Activated T-helper 1 cell treated with anti-CD3 and anti-CD28 coated beads, Interleukin-12 subunit alpha, Interleukin-12 subunit beta, Interleukin-2, Interleukin-4 antibody, amounts not matched to agents 30 ng/mL and 10 ng/mL and 1 ng/mL, durations not matched to agents 14 hours and 24 hours and 36 hours (primary cell): ENCODE measurements at regions of chr7 and their contacts with region 1.

Region 1: GRCh38 chr7:105073143-105073542 is 59.1 kb downstream of the KMT2E start:
- DNase-seq: no peak
- H3K4me3 Mint-ChIP-seq: no peak overlapping the region
- H3K27ac Mint-ChIP-seq: no peak overlapping the region
- H3K4me1 Mint-ChIP-seq: peaks cover 7% of the 10 kb centered on the region
- H3K27me3 Mint-ChIP-seq: no peaks in the 10 kb centered on the region

Region 2: DNA sequence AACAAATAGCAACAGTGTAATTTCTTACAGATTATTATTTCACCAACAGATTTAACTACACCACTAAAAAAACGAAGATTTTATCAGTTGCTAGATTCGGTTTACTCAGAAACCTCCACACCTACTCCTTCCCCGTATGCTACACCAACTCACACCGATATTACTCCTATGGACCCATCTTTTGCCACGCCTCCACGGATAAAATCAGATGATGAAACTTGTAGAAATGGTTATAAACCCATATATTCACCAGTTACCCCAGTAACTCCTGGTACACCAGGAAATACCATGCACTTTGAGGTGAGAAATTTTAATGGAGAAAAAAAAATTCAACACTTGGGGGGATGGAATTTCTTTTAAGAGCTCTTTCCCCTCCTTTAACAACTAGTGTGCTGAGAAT is 33.3 kb after region 1 on chr7:
- intact Hi-C with region 1: loop called (anchors 5 kb)
- DNase-seq: no peak
- H3K4me3 Mint-ChIP-seq: no peak overlapping the region
- H3K27ac Mint-ChIP-seq: peak overlapping the region; percentile 28
- H3K4me1 Mint-ChIP-seq: peaks cover 11% of the 10 kb centered on the region
- H3K27me3 Mint-ChIP-seq: no peaks in the 10 kb centered on the region